ENCODE measurements at regions of chr10 and their contacts with region 1.

Region 1: GRCh38 chr10:93916257-93917063 is 22.7 kb downstream of the SLC35G1 start:
- DNase-seq: no peak
- ATAC-seq: peak; percentile 80 to 85
- H3K4me3 ChIP-seq: no peak overlapping the region
- H3K27ac ChIP-seq: no peak overlapping the region
- H3K4me1 ChIP-seq: peaks cover 0 to 3% of the 10 kb centered on the region in 2 donors
- H3K27me3 ChIP-seq: no peaks in the 10 kb centered on the region
- CTCF ChIP-seq: peak; percentile 28 to 64 (median 51)
- POLR2A ChIP-seq: no peak

Region 2: DNA sequence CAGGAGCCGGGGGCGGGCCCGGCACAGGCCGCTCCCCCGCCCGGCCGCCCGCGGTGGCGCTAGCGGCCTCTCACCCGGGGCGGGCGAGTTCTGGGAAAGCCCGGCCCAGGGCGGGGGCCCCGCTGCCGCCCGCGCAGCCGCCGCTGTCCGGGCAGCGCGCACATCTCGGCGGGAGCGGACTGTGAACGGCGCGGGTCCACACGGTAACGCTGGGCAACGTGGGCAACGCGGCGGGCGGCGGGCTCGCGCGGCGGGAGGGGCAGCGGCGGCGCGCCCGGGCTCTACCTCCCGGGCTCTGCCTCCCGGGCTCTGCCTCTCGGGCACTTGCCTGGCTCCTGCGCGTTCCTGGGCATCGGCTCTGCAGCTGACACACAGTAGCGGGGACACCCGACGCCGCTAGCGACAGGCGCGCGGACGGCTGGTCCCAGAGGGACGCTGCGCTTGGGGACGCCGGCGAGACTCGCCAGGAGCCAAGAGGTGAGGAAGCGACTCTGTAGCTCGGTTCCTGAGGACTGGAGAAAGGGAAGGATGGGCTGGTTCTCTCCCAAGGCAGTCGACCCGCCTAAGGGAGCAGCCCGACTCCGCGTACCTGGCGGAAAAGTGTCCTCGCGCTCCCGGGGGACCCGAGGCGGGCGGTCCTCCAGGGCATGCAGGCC is 77.5 kb after region 1 on chr10 and contains the start of gene PLCE1:
- in situ Hi-C with region 1: no loop called
- intact Hi-C with region 1: loop called (anchors 5 kb)
- DNase-seq: peak; percentile 24 to 68
- ATAC-seq: peak; percentile 80 to 89
- H3K4me3 ChIP-seq: peak within 1 kb of the TSS; percentile 50 to 58 (median 55)
- H3K27ac ChIP-seq: peak within 1 kb of the TSS; percentile 44 to 61 (median 56)
- H3K4me1 ChIP-seq: peaks cover 6 to 22% of the 10 kb centered on the region in 2 donors
- H3K27me3 ChIP-seq: no peaks in the 10 kb centered on the region
- CTCF ChIP-seq: peak in 1 of 5 experiments; percentile 22
- POLR2A ChIP-seq: peak; percentile 34 to 52
- total RNA-seq, gene PLCE1: 2.7 to 5.9 (median 3.8) TPM

Region 3: DNA sequence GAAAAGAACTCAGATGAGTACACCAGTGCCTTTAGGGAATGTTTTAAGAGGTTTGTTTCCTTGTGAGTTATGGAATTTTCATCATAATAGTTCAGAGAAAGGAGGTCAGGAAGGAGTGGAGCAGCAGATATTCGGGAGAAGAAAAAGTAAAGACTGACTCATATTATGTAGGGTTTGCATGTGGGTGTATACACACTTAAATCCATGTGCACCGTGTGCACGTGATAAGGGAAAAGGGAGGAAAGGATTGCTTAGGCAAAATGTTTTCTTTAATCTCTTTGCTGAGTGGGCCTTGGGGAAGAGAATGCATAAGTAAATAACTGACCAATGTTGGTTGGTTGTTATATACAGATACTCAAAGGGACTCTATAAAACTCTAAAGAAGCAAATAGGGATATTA is 107.4 kb after region 1 on chr10:
- in situ Hi-C with region 1: no loop called
- intact Hi-C with region 1: no loop called
- DNase-seq: no peak
- ATAC-seq: no peak
- H3K4me3 ChIP-seq: no peak overlapping the region
- H3K27ac ChIP-seq: no peak overlapping the region
- H3K4me1 ChIP-seq: no peaks in the 10 kb centered on the region
- H3K27me3 ChIP-seq: no peaks in the 10 kb centered on the region
- CTCF ChIP-seq: no peak
- POLR2A ChIP-seq: no peak

Region 4: DNA sequence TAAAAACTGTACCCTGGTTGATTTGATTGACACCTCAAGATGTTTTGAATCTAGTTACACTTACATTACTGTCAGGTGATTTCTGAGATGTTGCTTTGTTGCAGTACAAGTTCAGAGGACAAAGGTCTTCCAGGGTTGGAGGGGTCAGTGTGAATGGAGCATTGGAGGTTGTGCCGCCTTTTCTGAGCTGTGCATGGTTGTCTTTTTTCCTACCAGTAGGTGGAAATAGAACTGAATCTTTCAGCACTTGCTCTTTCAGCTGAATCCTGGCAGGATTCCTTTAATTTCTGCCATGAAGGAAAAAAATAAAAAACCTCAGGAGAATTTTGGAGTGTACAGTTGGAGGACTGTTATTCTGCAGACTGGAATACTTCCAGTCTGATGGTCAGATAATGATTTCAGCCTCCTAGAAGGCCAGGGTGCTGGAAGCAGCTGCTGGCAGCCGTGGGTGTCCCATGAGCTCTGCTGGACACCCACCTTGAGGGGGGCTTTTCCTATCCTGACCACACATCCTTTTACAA is 159.9 kb after region 1 on chr10:
- in situ Hi-C with region 1: no loop called
- intact Hi-C with region 1: loop called (anchors 10 kb)
- DNase-seq: no peak
- ATAC-seq: peak; percentile 76 to 78
- H3K4me3 ChIP-seq: no peak overlapping the region
- H3K27ac ChIP-seq: no peak overlapping the region
- H3K4me1 ChIP-seq: peaks cover 16 to 18% of the 10 kb centered on the region in 2 donors
- H3K27me3 ChIP-seq: no peaks in the 10 kb centered on the region
- CTCF ChIP-seq: peak in 4 of 5 experiments; percentile 23 to 56 (median 36)
- POLR2A ChIP-seq: no peak

Region 5: GRCh38 chr10:94224656-94225055 is 308.2 kb after region 1 on chr10:
- in situ Hi-C with region 1: no loop called
- intact Hi-C with region 1: loop called (anchors 5 kb)
- DNase-seq: no peak
- ATAC-seq: no peak
- H3K4me3 ChIP-seq: no peak overlapping the region
- H3K27ac ChIP-seq: no peak overlapping the region
- H3K4me1 ChIP-seq: no peaks in the 10 kb centered on the region
- H3K27me3 ChIP-seq: no peaks in the 10 kb centered on the region
- CTCF ChIP-seq: no peak
- POLR2A ChIP-seq: no peak

Region 6: DNA sequence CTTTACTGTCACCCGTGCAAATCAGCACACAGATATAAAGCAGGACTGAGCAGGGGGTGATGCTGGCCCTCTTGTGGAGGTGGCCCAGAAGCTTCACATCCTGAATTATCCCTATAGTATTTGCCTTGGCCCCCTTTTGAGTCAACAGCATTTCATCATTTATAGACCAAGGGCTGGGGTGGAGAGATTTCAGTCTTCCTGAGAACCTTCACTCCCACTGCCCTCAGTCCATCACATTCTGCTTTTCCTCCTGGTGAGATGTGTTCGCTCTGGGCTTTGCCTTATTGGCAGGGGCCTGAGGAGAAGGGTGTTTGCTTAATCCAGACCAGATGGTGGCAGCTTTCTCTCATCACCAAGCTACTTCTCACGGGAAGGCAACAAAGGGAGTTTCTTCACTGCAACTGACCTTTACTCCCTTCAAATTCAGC is 398.6 kb after region 1 on chr10:
- in situ Hi-C with region 1: loop called (anchors 5 to 10 kb)
- intact Hi-C with region 1: loop called (anchors 1 kb)
- DNase-seq: no peak
- ATAC-seq: no peak
- H3K4me3 ChIP-seq: no peak overlapping the region
- H3K27ac ChIP-seq: no peak overlapping the region
- H3K4me1 ChIP-seq: no peaks in the 10 kb centered on the region
- H3K27me3 ChIP-seq: no peaks in the 10 kb centered on the region
- CTCF ChIP-seq: no peak
- POLR2A ChIP-seq: no peak

Region 7: GRCh38 chr10:94320285-94320914 is 403.9 kb after region 1 on chr10:
- in situ Hi-C with region 1: loop called (anchors 5 to 10 kb)
- intact Hi-C with region 1: loop called (anchors 1 kb)
- DNase-seq: peak; percentile 25 to 36
- ATAC-seq: peak in 1 of 2 donors; percentile 55
- H3K4me3 ChIP-seq: no peak overlapping the region
- H3K27ac ChIP-seq: no peak overlapping the region
- H3K4me1 ChIP-seq: no peaks in the 10 kb centered on the region
- H3K27me3 ChIP-seq: no peaks in the 10 kb centered on the region
- CTCF ChIP-seq: peak; percentile 63 to 86 (median 79)
- POLR2A ChIP-seq: no peak

Region 8: GRCh38 chr10:94450782-94451181 is 534.3 kb after region 1 on chr10:
- in situ Hi-C with region 1: no loop called
- intact Hi-C with region 1: loop called (anchors 5 kb)
- DNase-seq: no peak
- ATAC-seq: no peak
- H3K4me3 ChIP-seq: no peak overlapping the region
- H3K27ac ChIP-seq: peak overlapping the region in 1 of 4 donors; percentile 1
- H3K4me1 ChIP-seq: peaks cover 0 to 13% of the 10 kb centered on the region in 2 donors
- H3K27me3 ChIP-seq: no peaks in the 10 kb centered on the region
- CTCF ChIP-seq: no peak
- POLR2A ChIP-seq: no peak

Measured in gastrocnemius medialis (tissue), 4 donors.